Prostate gland (tissue), 2 donors: ENCODE measurements at regions of chr2 and their contacts with region 1.

Region 1: DNA sequence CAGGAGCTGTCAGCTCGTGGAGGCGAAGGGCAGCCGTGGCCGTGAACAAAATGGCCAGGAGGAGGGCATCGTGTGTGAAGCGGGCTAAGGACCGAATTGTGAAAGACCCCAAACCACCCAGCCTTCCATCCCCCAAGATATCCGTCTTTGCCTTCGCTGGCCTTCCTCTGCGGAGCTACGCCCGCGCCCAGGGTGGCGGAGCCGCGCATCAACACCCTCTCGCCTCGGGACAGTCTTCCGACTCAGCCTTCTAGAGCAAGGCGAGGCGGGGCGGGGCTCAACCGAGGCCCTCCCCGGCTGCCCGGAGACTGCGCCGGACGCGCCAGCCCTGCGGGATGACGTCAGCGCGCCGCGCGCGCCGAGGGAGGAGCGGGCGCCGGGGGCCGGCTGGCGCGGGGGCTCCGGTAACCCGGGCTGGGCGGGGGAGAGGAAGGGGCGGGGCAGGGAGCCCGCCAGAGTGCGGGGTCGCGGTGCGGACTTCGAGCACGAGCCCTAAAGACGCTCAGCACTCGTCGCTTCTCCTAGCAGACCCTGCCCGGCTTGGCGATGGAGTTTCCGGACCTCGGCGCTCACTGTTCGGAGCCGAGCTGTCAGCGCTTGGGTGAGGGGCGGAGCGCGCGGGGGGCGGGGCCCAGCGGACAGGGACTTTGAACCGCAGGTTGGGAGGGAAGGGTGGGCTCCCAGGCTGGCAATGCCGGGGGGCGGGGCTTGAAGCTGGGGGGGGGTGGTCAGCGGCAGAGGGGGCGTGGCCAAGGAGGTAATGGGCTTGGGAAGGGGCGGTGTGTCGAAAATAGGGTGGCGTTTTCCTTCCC is at the start of gene ZFAND2B:
- DNase-seq: peak; percentile 96
- H3K4me3 ChIP-seq: peak within 1 kb of the TSS; percentile 71 to 74
- H3K27ac ChIP-seq: peak within 1 kb of the TSS; percentile 98 to 99
- H3K4me1 ChIP-seq: peaks cover 11% of the 10 kb centered on the region
- H3K27me3 ChIP-seq: no peaks in the 10 kb centered on the region
- CTCF ChIP-seq: peak in 2 of 4 experiments; percentile 36 to 57
- POLR2A ChIP-seq: peak; percentile 100
- total RNA-seq, gene ZFAND2B: 49.0 to 57.2 TPM

Region 2: DNA sequence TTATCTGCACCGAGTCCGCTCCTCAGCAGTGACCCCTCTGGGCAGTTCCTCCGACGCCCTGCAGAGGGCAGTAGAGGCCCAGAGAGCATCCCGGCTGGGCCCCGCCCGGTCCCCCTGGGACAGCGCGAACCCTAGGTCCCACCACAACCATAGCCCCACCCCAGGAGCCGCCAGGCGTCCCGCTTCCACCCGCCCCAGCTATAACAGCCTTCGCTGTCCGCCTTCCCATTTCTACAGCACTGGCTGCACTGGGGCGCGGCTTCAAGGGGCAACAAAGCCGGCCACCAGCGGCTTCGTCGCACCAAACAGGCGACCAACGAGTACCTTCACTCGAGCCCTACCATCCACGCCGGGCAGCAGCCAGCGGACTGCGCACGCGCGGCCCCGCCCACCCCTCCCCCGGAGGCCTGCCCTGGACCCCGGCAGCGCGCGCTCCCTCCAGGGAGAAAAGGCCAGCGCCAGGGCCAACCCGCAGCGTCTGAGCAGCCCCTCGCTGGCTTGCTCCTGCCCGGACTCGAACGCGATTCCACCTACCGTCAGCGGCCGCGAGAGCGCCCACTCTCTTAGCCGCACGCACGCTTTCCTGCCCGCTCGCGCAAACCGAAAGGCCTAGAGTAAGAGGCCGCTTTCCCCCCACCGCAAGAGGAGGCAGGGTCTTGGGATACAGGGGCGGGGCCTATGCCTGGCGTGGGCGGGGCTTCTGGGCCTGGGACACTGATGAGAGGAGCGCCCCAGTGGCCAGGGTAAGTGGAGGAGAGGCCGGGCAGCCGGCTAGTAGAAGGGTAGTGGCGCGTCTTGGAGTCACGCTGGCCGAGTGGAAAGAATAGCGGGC is 46.2 kb before region 1 on chr2 and contains the start of gene NHEJ1:
- intact Hi-C with region 1: loop called (anchors 1 kb)
- DNase-seq: peak; percentile 95
- H3K4me3 ChIP-seq: peak within 1 kb of the TSS; percentile 70 to 77
- H3K27ac ChIP-seq: peak within 1 kb of the TSS; percentile 97 to 98
- H3K4me1 ChIP-seq: no peaks in the 10 kb centered on the region
- H3K27me3 ChIP-seq: no peaks in the 10 kb centered on the region
- CTCF ChIP-seq: peak; percentile 98 to 99 (median 98)
- POLR2A ChIP-seq: peak; percentile 66
- total RNA-seq, gene NHEJ1: 15.2 to 16.9 TPM